ENCODE measurements at regions of chr20 and their contacts with region 1.

Region 1: GRCh38 chr20:34312544-34313217 is 9.5 kb upstream of the AHCY start:
- DNase-seq: peak; percentile 97
- H3K4me3 Mint-ChIP-seq: peak overlapping the region; percentile 67
- H3K27ac Mint-ChIP-seq: peak overlapping the region; percentile 34
- H3K4me1 Mint-ChIP-seq: peaks cover 61% of the 10 kb centered on the region
- H3K27me3 Mint-ChIP-seq: no peaks in the 10 kb centered on the region
- CTCF ChIP-seq: peak; percentile 100

Region 2: DNA sequence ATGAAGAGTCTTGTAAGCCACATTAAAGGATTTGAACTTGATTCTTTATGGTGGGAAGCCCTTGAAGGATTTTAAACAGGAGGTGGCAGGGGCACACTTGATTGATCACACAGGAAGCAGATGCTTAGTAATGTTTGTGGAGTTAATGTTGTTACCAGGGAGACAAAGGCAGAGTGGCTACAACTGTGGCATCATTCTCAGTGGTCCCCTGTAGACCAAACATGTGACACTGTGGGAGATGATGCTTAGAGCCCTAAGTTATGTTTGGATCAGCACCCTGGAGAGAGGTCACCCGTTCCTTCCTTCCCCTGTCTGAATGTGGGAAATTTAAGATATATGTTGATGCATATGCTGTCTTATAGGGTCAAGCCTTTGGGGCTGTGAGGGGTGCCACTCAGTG is 253.8 kb before region 1 on chr20:
- CTCF ChIA-PET with region 1: no interaction called
- intact Hi-C with region 1: no loop called
- DNase-seq: no peak
- H3K4me3 Mint-ChIP-seq: no peak overlapping the region
- H3K27ac Mint-ChIP-seq: no peak overlapping the region
- H3K4me1 Mint-ChIP-seq: peaks cover 19% of the 10 kb centered on the region
- H3K27me3 Mint-ChIP-seq: no peaks in the 10 kb centered on the region
- CTCF ChIP-seq: no peak

Region 3: DNA sequence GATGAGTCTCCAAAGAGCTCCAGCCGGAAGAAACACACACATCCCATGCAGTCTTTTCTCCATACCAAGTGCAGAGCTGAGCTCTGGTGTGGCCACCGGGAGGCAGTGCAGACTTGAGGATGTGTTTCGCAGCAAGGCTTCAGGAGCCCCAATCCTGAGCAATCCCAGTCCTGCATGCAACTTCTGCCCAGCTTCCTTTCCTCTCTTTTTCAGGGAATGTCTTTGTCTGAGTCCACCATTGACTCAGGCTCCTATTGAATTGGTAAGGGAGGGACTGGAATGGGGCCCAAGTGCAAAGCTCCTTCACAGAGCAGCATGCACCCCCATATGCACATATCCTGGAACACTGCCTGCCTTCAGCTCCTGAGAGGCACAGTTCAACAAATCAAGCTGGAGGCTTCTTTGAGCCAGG is 122.0 kb before region 1 on chr20:
- CTCF ChIA-PET with region 1: interaction called, 15 read pairs
- intact Hi-C with region 1: no loop called
- DNase-seq: peak; percentile 85
- H3K4me3 Mint-ChIP-seq: no peak overlapping the region
- H3K27ac Mint-ChIP-seq: no peak overlapping the region
- H3K4me1 Mint-ChIP-seq: peaks cover 7% of the 10 kb centered on the region
- H3K27me3 Mint-ChIP-seq: no peaks in the 10 kb centered on the region
- CTCF ChIP-seq: peak; percentile 81

Region 4: GRCh38 chr20:34390769-34391452 is 78.2 kb after region 1 on chr20:
- CTCF ChIA-PET with region 1: interaction called, 9 read pairs
- intact Hi-C with region 1: loop called (anchors 5 kb)
- DNase-seq: peak; percentile 97
- H3K4me3 Mint-ChIP-seq: peak overlapping the region; percentile 35
- H3K27ac Mint-ChIP-seq: peak overlapping the region; percentile 83
- H3K4me1 Mint-ChIP-seq: peaks cover 50% of the 10 kb centered on the region
- H3K27me3 Mint-ChIP-seq: no peaks in the 10 kb centered on the region
- CTCF ChIP-seq: no peak

Region 5: GRCh38 chr20:34410336-34410735 is 97.7 kb after region 1 on chr20:
- CTCF ChIA-PET with region 1: interaction called, 15 read pairs
- intact Hi-C with region 1: loop called (anchors 5 kb)
- DNase-seq: no peak
- H3K4me3 Mint-ChIP-seq: no peak overlapping the region
- H3K27ac Mint-ChIP-seq: peak overlapping the region; percentile 23
- H3K4me1 Mint-ChIP-seq: peaks cover 34% of the 10 kb centered on the region
- H3K27me3 Mint-ChIP-seq: no peaks in the 10 kb centered on the region
- CTCF ChIP-seq: no peak

Region 6: GRCh38 chr20:34473262-34473883 is 160.7 kb after region 1 on chr20:
- CTCF ChIA-PET with region 1: interaction called, 35 read pairs
- intact Hi-C with region 1: loop called (anchors 1 kb)
- DNase-seq: peak; percentile 80
- H3K4me3 Mint-ChIP-seq: no peak overlapping the region
- H3K27ac Mint-ChIP-seq: no peak overlapping the region
- H3K4me1 Mint-ChIP-seq: no peaks in the 10 kb centered on the region
- H3K27me3 Mint-ChIP-seq: no peaks in the 10 kb centered on the region
- CTCF ChIP-seq: peak; percentile 60

Region 7: DNA sequence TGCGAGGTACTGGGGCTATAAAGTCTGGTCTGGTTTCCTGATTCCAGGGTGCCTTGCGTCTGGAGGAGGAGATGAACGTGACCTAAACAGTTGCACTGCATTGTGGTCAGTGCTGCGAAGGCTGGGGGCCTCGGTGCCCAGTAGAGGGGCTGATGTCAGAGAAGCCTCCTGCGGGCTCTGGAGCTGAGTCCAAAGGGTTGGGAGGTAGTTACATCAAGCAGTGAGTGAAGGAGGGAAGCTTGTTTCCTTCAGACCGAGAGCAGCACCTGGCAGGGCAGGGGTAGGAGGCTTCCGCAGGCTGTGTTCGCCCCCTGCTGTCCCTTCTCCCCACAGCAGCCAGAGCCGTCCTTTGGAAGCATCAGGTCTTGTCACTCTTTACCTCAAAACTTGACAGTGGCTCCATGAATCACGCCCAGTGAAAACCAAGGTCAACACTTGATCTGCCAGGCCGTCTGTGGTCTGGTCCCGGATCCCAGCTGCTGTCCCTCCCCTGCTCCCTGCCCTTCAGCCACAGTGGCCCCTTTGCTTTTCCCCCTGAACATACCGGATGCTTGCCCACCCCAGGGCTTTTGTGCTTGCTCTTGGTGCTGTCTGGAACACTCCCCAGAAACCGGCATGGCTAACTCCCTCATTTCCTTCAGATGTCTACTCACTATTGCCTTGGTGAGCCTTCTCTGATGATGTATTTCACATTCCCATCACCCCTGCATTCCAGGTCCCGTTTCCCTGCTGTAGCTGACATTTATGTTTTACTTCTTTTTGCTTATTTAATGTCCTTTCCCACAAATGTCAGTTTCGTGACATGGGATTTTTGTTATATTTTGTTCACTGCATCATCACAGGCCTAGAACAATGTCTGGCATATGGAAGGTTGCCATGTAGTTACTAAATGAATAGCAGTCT is 210.5 kb after region 1 on chr20:
- CTCF ChIA-PET with region 1: interaction called, 51 read pairs
- intact Hi-C with region 1: loop called (anchors 2 kb)
- DNase-seq: peak; percentile 84
- H3K4me3 Mint-ChIP-seq: no peak overlapping the region
- H3K27ac Mint-ChIP-seq: peak overlapping the region; percentile 39
- H3K4me1 Mint-ChIP-seq: peaks cover 71% of the 10 kb centered on the region
- H3K27me3 Mint-ChIP-seq: no peaks in the 10 kb centered on the region
- CTCF ChIP-seq: peak; percentile 88

Region 8: GRCh38 chr20:34768096-34768495 is 455.4 kb after region 1 on chr20:
- CTCF ChIA-PET with region 1: interaction called, 11 read pairs
- intact Hi-C with region 1: no loop called
- DNase-seq: no peak
- H3K4me3 Mint-ChIP-seq: no peak overlapping the region
- H3K27ac Mint-ChIP-seq: no peak overlapping the region
- H3K4me1 Mint-ChIP-seq: peaks cover 5% of the 10 kb centered on the region
- H3K27me3 Mint-ChIP-seq: no peaks in the 10 kb centered on the region
- CTCF ChIP-seq: no peak